Calu3 (cell line): ENCODE measurements at regions of chr11 and their contacts with region 1.

Region 1: DNA sequence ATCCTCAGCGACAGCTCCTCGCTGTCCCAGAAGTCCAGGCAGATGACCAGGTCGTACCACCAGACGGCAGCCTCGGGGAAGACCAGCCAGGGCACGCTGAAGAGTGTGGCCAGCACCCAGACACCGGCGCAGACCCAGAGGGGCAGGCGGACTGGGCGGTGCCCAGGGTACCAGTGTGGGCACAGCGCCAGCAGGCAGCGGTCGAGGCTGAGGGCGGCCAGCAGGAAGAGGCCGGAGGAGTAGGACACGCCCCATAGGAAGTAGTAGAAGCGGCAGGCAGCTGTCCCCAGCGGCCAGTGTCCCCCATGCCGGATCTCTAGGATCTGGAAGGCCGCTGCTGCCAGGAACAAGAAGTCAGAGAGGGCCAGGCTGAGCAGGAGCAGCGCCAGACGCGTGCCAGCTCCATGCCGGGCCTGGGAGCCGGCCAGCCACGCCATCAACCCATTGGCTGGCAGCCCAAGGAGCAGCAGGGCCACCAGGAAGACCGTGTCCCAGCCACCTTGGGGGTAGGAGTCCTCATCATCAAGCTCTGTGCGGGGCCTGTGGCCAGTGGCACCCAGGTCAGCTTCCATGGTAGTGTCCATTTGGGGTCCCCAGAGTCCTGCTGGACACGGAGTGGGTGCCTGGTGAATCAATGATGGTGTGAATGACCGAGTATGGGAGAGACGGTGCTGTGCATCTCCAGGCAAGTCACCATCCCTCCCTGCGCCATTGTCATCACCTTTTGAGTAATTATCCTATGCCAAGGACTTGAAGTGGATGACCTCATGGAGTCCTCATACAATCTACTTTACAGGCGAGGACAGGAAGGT is at the start of gene GPR152:
- DNase-seq: peak; percentile 90
- H3K4me3 Mint-ChIP-seq: peak within 1 kb of the TSS; percentile 75
- H3K27ac Mint-ChIP-seq: peak within 1 kb of the TSS; percentile 78
- H3K4me1 Mint-ChIP-seq: peaks cover 15% of the 10 kb centered on the region
- H3K27me3 Mint-ChIP-seq: no peaks in the 10 kb centered on the region
- CTCF ChIP-seq: no peak
- total RNA-seq, gene GPR152: not detected in 2 replicates

Region 2: GRCh38 chr11:67468835-67469811 is 16.8 kb after region 1 on chr11 and contains the start of gene TMEM134:
- CTCF ChIA-PET with region 1: interaction called, 10 read pairs
- intact Hi-C with region 1: no loop called
- DNase-seq: peak; percentile 93
- H3K4me3 Mint-ChIP-seq: peak within 1 kb of the TSS; percentile 85
- H3K27ac Mint-ChIP-seq: peak within 1 kb of the TSS; percentile 64
- H3K4me1 Mint-ChIP-seq: peaks cover 35% of the 10 kb centered on the region
- H3K27me3 Mint-ChIP-seq: peaks cover 10% of the 10 kb centered on the region
- CTCF ChIP-seq: peak; percentile 14
- total RNA-seq, gene TMEM134: 31.9 and 33.2 TPM in 2 replicates